ENCODE measurements at regions of chr2 and their contacts with region 1.

Region 1: GRCh38 chr2:161063157-161063954 is 96.9 kb upstream of the TANK start:
- DNase-seq: peak; percentile 79
- ATAC-seq: peak; percentile 90
- H3K4me3 Mint-ChIP-seq: no peak overlapping the region
- H3K27ac Mint-ChIP-seq: no peak overlapping the region
- H3K4me1 Mint-ChIP-seq: peaks cover 11% of the 10 kb centered on the region
- H3K27me3 Mint-ChIP-seq: peaks cover 4% of the 10 kb centered on the region

Region 2: DNA sequence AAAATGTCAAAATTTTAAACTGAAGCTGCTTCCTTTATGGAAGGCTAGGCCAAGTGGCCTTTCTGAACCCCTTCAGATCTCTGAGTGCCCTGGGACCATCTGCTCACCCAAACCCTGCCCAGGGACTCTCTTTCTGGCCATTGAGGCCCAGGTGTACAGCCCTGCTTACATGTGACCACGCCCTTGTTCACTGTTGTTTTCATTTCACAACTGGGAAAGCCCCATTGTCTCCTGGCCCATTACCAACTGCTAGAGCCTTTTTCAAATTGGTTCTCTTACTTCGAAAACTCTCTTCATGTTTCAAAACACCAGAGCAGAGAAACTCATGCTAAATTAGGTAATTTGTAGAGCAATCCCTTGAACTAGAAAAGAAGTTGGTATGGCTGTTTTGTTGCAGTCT is 122.7 kb before region 1 on chr2:
- CTCF ChIA-PET with region 1: no interaction called
- POLR2A ChIA-PET with region 1: no interaction called
- DNase-seq: no peak
- ATAC-seq: no peak
- H3K4me3 Mint-ChIP-seq: no peak overlapping the region
- H3K27ac Mint-ChIP-seq: no peak overlapping the region
- H3K4me1 Mint-ChIP-seq: no peaks in the 10 kb centered on the region
- H3K27me3 Mint-ChIP-seq: no peaks in the 10 kb centered on the region

Region 3: DNA sequence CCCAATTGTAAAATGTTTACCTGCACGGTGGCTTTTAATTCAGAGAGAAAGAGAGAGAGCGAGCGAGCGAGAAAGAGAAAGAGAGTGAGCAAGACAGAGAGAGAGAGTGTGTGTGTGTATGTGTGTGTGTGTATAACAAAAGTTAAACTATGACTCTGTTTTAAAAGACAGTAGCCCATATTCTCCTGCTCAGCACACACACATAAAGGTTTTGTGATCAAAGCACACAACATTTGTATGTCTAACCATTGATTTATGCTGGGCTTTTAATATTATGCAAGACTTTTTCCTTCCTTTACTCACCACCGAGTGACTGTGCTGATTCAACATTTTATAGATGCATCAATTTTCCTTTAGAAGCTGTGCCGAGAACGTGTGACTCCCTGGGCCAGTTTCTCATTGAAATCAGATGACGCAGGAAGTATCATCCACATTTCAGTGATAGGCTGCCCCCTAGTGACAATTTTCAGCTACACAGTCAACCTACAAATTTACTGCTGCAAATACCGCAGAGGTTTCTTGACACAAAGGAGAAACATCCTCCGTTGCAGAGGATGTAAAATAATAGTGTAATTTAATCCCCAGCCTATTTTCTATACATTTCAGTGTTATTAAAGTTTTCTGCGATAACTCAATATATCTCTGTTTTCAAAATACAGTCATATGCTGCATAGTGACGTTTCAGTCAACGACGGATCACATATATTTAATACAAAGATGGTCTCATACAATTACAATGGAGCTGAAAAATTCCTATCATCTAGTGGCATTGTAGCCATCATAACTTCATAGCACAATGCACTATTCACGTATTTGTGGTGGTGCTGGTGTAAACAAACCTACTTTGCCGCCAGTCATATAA is 69.0 kb before region 1 on chr2:
- CTCF ChIA-PET with region 1: interaction called, 22 read pairs
- POLR2A ChIA-PET with region 1: no interaction called
- DNase-seq: peak; percentile 87
- ATAC-seq: peak; percentile 87
- H3K4me3 Mint-ChIP-seq: no peak overlapping the region
- H3K27ac Mint-ChIP-seq: no peak overlapping the region
- H3K4me1 Mint-ChIP-seq: peaks cover 9% of the 10 kb centered on the region
- H3K27me3 Mint-ChIP-seq: peaks cover 6% of the 10 kb centered on the region

Region 4: DNA sequence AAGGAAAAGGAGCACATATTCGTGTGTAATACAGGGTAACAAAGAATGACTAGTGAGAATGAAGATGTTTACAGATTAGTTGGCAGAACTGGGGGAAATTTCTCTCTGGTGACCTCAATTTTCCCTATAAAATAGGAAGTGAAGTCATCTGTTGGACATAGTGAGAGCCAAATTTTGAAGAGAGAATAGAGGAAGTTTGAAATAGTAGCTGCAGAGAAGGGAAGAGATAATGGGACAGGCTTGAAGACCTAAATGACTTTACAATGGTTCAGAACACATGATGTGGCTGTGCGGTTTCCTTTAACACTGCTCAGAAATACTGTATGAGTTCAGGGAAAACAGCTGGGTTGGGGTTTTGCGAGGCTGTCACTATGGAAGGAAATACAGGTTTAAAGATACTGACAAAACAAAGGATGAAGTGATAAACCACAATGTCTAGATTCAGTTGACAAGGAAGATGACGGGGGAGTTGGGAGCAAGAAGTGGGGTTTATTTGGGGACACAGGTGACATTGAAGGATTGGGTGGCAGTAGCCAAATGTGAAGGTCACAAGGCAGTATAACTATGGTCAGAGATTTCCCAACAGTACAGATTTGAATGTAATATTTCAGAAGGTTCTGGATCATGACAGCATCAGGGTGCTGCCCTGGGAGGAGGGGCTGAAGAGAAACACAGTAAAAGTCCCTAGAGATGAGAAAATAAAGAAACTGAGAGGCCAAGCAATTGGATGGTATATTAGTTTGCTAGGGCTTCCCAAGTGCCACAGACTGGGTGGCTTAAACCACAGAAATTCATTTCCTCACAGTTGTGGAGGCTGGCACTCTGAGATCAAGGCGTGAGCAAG is 14.2 kb after region 1 on chr2:
- CTCF ChIA-PET with region 1: interaction called, 92 read pairs
- POLR2A ChIA-PET with region 1: interaction called, 5 read pairs
- DNase-seq: peak; percentile 92
- ATAC-seq: peak; percentile 86
- H3K4me3 Mint-ChIP-seq: peak overlapping the region; percentile 49
- H3K27ac Mint-ChIP-seq: peak overlapping the region; percentile 92
- H3K4me1 Mint-ChIP-seq: peaks cover 54% of the 10 kb centered on the region
- H3K27me3 Mint-ChIP-seq: no peaks in the 10 kb centered on the region

Region 5: GRCh38 chr2:161104054-161104553 is 40.7 kb after region 1 on chr2:
- CTCF ChIA-PET with region 1: interaction called, 21 read pairs
- POLR2A ChIA-PET with region 1: no interaction called
- DNase-seq: no peak
- ATAC-seq: no peak
- H3K4me3 Mint-ChIP-seq: no peak overlapping the region
- H3K27ac Mint-ChIP-seq: no peak overlapping the region
- H3K4me1 Mint-ChIP-seq: peaks cover 15% of the 10 kb centered on the region
- H3K27me3 Mint-ChIP-seq: no peaks in the 10 kb centered on the region

Region 6: GRCh38 chr2:161146996-161147395 is 83.6 kb after region 1 on chr2:
- CTCF ChIA-PET with region 1: no interaction called
- POLR2A ChIA-PET with region 1: no interaction called
- DNase-seq: no peak
- ATAC-seq: no peak
- H3K4me3 Mint-ChIP-seq: no peak overlapping the region
- H3K27ac Mint-ChIP-seq: no peak overlapping the region
- H3K4me1 Mint-ChIP-seq: peaks cover 25% of the 10 kb centered on the region
- H3K27me3 Mint-ChIP-seq: no peaks in the 10 kb centered on the region

Region 7: GRCh38 chr2:161217597-161218185 is 154.3 kb after region 1 on chr2:
- CTCF ChIA-PET with region 1: interaction called, 16 read pairs
- POLR2A ChIA-PET with region 1: no interaction called
- DNase-seq: no peak
- ATAC-seq: peak; percentile 33
- H3K4me3 Mint-ChIP-seq: no peak overlapping the region
- H3K27ac Mint-ChIP-seq: no peak overlapping the region
- H3K4me1 Mint-ChIP-seq: peaks cover 28% of the 10 kb centered on the region
- H3K27me3 Mint-ChIP-seq: no peaks in the 10 kb centered on the region

Region 8: DNA sequence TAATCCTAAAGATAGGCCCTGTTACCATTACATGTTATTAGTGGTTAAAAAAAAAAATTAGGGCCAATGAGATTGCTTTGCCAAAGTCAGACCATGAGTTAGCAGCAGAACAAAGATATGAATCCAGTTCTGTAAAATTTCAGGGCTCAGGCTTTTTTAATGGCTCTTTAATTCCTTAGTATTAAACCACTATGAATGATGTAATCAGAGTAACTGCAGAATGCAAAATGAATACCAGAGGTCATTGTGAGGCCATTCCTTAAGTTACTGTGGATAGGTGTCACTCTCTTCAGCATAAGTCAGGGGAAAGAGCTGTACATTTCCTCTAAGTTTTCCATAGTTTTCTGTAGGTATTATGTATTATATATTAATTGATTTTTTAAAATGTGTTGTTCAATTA is 310.6 kb after region 1 on chr2:
- CTCF ChIA-PET with region 1: no interaction called
- POLR2A ChIA-PET with region 1: no interaction called
- DNase-seq: no peak
- ATAC-seq: no peak
- H3K4me3 Mint-ChIP-seq: no peak overlapping the region
- H3K27ac Mint-ChIP-seq: no peak overlapping the region
- H3K4me1 Mint-ChIP-seq: no peaks in the 10 kb centered on the region
- H3K27me3 Mint-ChIP-seq: no peaks in the 10 kb centered on the region

Measured in activated CD8-positive, alpha-beta T cell treated with anti-CD3 and anti-CD28 coated beads, Interleukin-2, amount 10 ng/mL, durations not matched to agents 7 days and 5 days (primary cell).